ENCODE measurements at regions of chr20 and their contacts with region 1.

Region 1: GRCh38 chr20:23420943-23421931 is at the start of gene NAPB:
- DNase-seq: peak; percentile 90
- H3K4me3 Mint-ChIP-seq: peak within 1 kb of the TSS; percentile 93
- H3K27ac Mint-ChIP-seq: peak within 1 kb of the TSS; percentile 90
- H3K4me1 Mint-ChIP-seq: peaks cover 39% of the 10 kb centered on the region
- H3K27me3 Mint-ChIP-seq: peaks cover 6% of the 10 kb centered on the region
- total RNA-seq, gene NAPB: 13.8 and 14.0 TPM in 2 replicates

Region 2: GRCh38 chr20:23357767-23358591 is 63.3 kb before region 1 on chr20:
- intact Hi-C with region 1: loop called (anchors 1 kb)
- DNase-seq: peak; percentile 100
- H3K4me3 Mint-ChIP-seq: peak overlapping the region; percentile 88
- H3K27ac Mint-ChIP-seq: peak overlapping the region; percentile 86
- H3K4me1 Mint-ChIP-seq: peaks cover 21% of the 10 kb centered on the region
- H3K27me3 Mint-ChIP-seq: no peaks in the 10 kb centered on the region

Region 3: GRCh38 chr20:23407781-23408464 is 13.3 kb before region 1 on chr20:
- intact Hi-C with region 1: loop called (anchors 1 kb)
- DNase-seq: no peak
- H3K4me3 Mint-ChIP-seq: no peak overlapping the region
- H3K27ac Mint-ChIP-seq: peak overlapping the region; percentile 79
- H3K4me1 Mint-ChIP-seq: peaks cover 36% of the 10 kb centered on the region
- H3K27me3 Mint-ChIP-seq: no peaks in the 10 kb centered on the region

Region 4: GRCh38 chr20:23456409-23456808 is 35.2 kb after region 1 on chr20:
- intact Hi-C with region 1: no loop called
- DNase-seq: no peak
- H3K4me3 Mint-ChIP-seq: no peak overlapping the region
- H3K27ac Mint-ChIP-seq: no peak overlapping the region
- H3K4me1 Mint-ChIP-seq: peaks cover 7% of the 10 kb centered on the region
- H3K27me3 Mint-ChIP-seq: peaks cover 4% of the 10 kb centered on the region